ENCODE measurements at regions of chr2 and their contacts with region 1.

Region 1: DNA sequence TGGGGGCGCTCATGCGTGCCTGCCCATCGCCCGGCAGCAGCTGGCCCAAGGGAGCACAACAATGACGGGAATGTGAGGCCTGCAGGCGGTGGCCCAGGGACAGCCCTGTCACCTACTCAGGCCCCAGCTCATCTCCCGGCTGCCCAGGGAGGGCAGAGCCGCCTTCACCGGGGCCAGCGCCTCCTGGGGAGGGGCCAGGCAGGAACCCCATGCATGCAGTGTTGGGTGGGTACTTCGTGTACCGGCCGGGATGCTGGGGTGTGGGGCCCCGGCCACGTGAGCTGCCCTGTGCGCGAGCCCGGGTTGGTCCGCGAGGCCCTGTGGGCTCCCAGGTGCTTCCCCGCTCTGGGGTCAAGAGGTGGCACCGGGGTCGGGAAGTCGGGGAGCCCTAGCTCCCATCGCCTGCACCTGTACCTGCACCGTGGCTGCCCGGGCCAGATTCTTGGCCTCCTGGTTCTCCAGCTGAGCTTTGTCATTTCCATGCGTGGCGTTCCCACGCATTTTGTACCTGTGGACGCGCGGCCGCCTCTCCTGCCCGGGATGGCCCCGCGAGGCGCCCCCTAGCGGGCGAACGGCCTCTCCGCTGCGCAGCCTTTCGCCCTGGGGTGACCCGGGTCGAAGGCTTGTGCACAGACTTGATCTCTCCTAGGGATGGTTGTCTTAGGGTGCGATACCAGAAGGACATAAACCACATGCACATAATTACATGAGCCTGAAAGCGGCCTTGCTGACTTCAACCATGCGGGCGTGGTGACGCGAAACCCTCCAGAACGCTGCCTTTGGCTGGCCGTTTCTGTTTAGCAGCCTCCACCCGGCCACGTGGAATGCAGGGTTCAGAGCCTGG is 950 bp downstream of the KLHL30 start:
- DNase-seq: no peak
- ATAC-seq: peak; percentile 62

Region 2: DNA sequence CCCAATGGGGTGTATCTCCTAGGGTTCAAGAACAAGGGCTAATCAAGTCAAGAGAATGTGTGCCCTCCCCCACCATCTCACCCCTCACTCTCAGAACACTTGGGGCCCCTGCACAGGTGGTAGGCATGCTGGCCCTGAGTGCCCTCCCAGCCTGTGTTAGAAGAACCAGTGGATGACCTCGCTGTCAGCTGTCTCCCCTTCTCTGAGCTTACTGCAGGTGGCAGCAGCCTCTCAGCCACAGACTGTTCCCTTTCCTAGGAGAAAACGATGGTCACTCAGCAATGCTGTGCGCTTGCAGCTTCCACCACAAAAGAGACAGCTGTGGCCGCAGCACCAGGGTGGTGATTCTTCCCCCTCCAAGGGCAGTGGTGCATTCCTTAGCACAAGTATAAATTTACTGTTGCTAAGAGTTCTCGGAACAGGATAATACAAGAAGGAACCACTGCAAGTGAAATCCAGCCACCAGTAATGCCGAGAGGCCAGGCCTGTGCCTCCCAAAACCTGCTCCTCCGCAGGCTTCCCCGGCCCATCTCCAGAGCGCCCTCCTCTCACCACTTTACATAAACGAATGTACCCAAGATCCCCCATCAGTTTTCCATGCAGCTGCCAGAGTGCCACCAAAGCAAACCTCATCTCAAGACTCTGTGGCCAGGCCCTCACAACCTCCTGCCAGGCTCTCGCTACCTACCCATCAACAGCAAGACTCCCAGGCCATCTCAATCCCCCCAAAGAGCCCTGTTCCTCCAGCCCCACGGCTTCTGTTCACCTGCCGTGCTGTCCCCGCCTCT is 280.9 kb before region 1 on chr2:
- intact Hi-C with region 1: loop called (anchors 10 kb)
- DNase-seq: peak; percentile 67
- ATAC-seq: peak; percentile 77